ENCODE measurements at regions of chr21 and their contacts with region 1.

Region 1: DNA sequence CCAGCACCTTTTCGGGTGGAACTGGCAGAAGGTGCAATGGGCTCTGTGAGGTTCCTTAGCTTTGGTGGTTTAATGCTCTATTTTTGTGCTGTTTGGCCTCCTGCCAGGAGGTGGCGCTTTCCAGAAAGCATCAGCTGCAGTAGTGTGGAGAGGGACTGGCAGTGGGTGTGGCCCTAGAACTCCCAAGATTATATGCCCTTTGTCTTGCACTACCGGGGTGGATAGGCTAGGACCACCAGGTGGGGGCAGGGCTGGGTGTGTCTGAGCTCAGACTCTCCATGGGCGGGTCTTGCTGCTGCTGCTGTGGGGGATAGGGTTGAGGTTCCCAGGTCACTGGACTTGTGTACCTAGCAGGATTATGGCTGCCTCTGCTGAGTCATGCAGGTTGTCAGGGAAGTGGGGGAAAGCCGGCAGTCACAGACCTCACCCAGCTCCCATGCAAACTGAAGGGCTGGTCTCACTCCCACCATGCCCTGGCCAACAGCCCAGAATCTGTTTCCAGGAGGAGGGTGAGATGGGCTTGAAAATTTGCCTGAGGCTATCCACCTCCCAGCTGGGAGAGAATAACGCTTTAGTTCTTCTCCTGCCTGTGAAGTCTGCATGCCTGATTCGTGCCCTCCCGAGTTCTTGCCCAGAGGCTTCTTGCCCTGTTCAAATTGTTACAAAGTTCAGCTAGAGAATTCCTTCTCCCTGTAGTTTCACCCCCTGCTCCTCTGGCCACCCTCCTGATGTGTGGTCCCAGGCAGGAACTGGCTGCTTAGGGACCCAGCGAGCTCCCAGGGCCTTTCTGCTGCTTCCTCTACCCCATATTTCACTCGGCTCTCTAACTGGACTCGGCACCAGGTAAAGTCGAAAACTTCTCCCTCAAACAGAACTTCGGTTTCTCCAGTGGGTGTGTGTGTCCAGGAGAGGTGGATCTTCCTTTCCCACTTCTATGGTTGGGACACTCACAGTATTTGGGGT is 76.5 kb upstream of the BTG3 start:
- DNase-seq: peak; percentile 96
- H3K4me3 ChIP-seq: no peak overlapping the region
- H3K27ac ChIP-seq: peak overlapping the region; percentile 92
- H3K4me1 ChIP-seq: peaks cover 29% of the 10 kb centered on the region
- H3K27me3 ChIP-seq: no peaks in the 10 kb centered on the region
- CTCF ChIP-seq: peak; percentile 35 to 50

Region 2: GRCh38 chr21:16198546-16198945 is 1490.6 kb before region 1 on chr21:
- CTCF ChIA-PET with region 1: no interaction called
- dilution Hi-C with region 1: no loop called
- in situ Hi-C with region 1: no loop called
- intact Hi-C with region 1: no loop called
- DNase-seq: no peak
- H3K4me3 ChIP-seq: no peak overlapping the region
- H3K27ac ChIP-seq: no peak overlapping the region
- H3K4me1 ChIP-seq: no peaks in the 10 kb centered on the region
- H3K27me3 ChIP-seq: no peaks in the 10 kb centered on the region
- CTCF ChIP-seq: no peak

Region 3: GRCh38 chr21:17527240-17527639 is 162.0 kb before region 1 on chr21:
- CTCF ChIA-PET with region 1: no interaction called
- dilution Hi-C with region 1: no loop called
- in situ Hi-C with region 1: no loop called
- intact Hi-C with region 1: no loop called
- DNase-seq: peak; percentile 32
- H3K4me3 ChIP-seq: no peak overlapping the region
- H3K27ac ChIP-seq: no peak overlapping the region
- H3K4me1 ChIP-seq: peaks cover 3% of the 10 kb centered on the region
- H3K27me3 ChIP-seq: no peaks in the 10 kb centered on the region
- CTCF ChIP-seq: no peak

Region 4: DNA sequence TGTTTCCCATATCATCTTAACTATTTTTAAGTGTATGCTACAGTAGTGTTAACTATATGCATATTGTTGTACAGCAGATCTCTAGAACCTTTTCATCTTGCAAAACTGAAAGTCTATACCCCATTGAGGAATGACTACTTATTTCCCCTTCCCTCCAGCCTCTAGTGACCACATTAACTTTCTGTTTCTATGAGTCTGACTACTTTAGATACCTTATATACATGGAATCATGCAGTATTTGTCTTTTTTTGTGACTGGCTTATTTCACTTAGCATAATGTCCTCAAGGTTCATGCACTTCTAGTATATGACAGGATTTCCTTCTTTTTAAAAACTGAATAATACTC is 20.0 kb after region 1 on chr21:
- CTCF ChIA-PET with region 1: no interaction called
- dilution Hi-C with region 1: no loop called
- in situ Hi-C with region 1: no loop called
- intact Hi-C with region 1: loop called (anchors 2 kb)
- DNase-seq: no peak
- H3K4me3 ChIP-seq: no peak overlapping the region
- H3K27ac ChIP-seq: peak overlapping the region; percentile 85
- H3K4me1 ChIP-seq: peaks cover 24% of the 10 kb centered on the region
- H3K27me3 ChIP-seq: no peaks in the 10 kb centered on the region
- CTCF ChIP-seq: no peak

Region 5: GRCh38 chr21:17780539-17780938 is 91.3 kb after region 1 on chr21:
- CTCF ChIA-PET with region 1: no interaction called
- dilution Hi-C with region 1: no loop called
- in situ Hi-C with region 1: no loop called
- intact Hi-C with region 1: loop called (anchors 5 kb)
- DNase-seq: no peak
- H3K4me3 ChIP-seq: no peak overlapping the region
- H3K27ac ChIP-seq: no peak overlapping the region
- H3K4me1 ChIP-seq: no peaks in the 10 kb centered on the region
- H3K27me3 ChIP-seq: no peaks in the 10 kb centered on the region
- CTCF ChIP-seq: no peak

Region 6: DNA sequence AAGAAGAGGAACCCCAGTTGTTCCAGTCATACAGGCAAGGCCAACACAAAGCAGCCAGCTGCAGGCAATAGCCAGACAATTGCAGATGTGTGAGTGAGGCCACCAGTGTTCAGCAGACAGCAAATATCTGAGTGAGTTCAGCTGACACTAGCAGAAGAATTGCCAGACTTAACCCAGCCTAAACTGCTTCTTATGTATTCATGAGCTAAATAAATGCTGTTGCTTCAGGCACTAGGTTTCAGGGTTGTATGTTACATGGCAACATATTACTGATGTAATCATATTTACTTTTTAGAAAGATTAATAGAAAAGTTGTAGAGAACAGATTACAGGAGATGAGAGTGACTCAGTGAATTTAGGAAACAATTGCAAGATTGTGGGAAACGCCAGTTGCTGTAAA is 425.6 kb after region 1 on chr21:
- CTCF ChIA-PET with region 1: no interaction called
- dilution Hi-C with region 1: no loop called
- in situ Hi-C with region 1: no loop called
- intact Hi-C with region 1: no loop called
- DNase-seq: no peak
- H3K4me3 ChIP-seq: no peak overlapping the region
- H3K27ac ChIP-seq: no peak overlapping the region
- H3K4me1 ChIP-seq: no peaks in the 10 kb centered on the region
- H3K27me3 ChIP-seq: no peaks in the 10 kb centered on the region
- CTCF ChIP-seq: no peak

Measured in mammary epithelial cell (primary cell).